ENCODE measurements at regions of chr10 and their contacts with region 1.

Region 1: DNA sequence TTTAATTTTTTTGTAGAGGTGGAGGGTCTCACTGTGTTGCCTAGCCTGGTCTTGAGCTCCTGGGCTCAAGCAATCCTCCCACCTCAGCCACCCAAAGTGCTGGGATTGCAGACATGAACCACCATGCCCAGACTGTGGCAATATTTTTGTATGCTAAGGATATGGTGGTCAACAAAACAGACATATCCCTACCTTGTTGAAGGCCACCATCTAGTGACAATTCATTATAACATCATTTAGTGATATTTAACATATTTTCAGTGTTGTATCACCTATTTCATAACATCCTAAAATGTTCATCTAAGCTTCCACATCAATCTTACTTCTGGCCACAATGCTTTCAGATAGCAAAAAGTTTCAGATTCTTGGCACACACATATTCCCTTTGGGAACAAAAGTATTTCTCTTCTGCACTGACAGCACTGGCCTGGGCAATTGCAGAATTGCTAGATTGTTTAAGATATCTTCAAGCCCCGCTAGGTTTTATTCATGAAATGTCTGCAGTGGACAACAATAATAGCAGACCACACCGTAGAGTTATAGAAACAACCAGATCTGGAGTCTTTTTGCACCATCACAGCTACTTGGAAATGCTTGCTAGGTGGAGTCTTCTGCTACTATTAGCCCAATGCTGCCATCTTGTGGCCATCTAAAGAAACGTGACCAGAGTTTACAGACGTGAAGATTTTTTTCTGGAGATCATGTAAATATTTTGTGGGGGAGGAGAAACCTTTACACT is 58.4 kb downstream of the DNAJC12 start:
- DNase-seq: peak; percentile 75
- ATAC-seq: peak; percentile 90
- H3K4me3 ChIP-seq: no peak overlapping the region
- H3K27ac ChIP-seq: no peak overlapping the region
- H3K4me1 ChIP-seq: no peaks in the 10 kb centered on the region; a peak in 1 of 4 replicates
- H3K27me3 ChIP-seq: no peaks in the 10 kb centered on the region
- CTCF ChIP-seq: peak; percentile 66 to 86 (median 77); a peak in 5 of 6 replicates
- POLR2A ChIP-seq: no peak
- RAD21 ChIP-seq: peak; percentile 90

Region 2: DNA sequence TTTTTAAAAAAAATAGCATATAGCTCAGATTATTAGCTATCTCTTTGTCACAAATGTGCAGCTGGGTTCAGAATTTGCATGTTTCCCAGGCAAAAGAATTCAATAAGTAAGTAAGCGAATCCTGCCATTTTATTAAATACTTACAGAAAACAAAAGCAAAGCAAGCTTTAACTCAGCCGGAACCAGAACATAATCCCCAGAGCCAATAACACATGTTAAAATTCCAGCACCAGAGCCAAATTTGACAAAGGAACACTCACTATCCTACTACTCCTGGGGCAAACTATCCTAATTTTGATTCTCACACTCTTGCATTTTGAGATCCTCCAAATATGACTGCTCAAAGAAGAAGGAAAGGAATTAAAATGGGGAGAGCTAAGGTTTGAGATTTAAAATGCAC is 821.2 kb before region 1 on chr10:
- CTCF ChIA-PET with region 1: no interaction called
- POLR2A ChIA-PET with region 1: no interaction called
- RAD21 ChIA-PET with region 1: no interaction called
- intact Hi-C with region 1: loop called (anchors 10 kb)
- DNase-seq: no peak
- ATAC-seq: no peak
- H3K4me3 ChIP-seq: no peak overlapping the region
- H3K27ac ChIP-seq: no peak overlapping the region
- H3K4me1 ChIP-seq: no peaks in the 10 kb centered on the region
- H3K27me3 ChIP-seq: no peaks in the 10 kb centered on the region
- CTCF ChIP-seq: no peak
- POLR2A ChIP-seq: no peak
- RAD21 ChIP-seq: no peak

Region 3: DNA sequence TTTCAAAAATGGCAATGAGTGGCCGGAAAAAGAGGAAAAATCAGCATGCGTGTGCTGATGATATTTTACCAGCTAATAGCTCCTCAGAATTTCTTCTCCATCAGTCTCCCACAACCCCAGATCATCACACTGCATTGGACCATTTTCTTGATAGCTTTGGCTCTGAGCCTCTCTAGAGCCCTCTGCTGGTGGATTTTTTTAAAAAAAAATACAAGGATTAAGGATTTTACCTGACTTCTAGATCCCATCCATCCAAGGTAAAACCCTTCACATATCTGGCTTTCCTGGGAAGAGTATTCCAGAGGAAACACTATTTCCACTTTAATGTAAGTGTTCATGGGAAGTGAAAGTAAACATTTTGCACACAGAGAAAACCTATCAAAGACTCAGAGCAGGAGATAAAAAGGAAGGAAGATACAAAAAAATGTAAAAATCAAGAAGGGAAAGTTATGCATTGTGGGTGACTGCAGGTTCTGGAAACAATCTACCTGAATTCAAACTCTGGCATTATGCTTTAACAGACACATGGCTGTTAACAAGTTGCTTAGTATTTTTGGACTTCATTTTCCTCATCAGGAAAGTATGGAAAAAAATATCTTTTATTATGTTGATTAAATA is 472.9 kb before region 1 on chr10:
- CTCF ChIA-PET with region 1: interaction called, 5 read pairs
- POLR2A ChIA-PET with region 1: interaction called, 3 read pairs
- RAD21 ChIA-PET with region 1: no interaction called
- intact Hi-C with region 1: loop called (anchors 5 kb)
- DNase-seq: peak; percentile 24
- ATAC-seq: peak; percentile 40; the same call in 1 of the 2 replicates
- H3K4me3 ChIP-seq: no peak overlapping the region
- H3K27ac ChIP-seq: no peak overlapping the region
- H3K4me1 ChIP-seq: no peaks in the 10 kb centered on the region
- H3K27me3 ChIP-seq: no peaks in the 10 kb centered on the region
- CTCF ChIP-seq: peak; percentile 37 to 66 (median 48); a peak in 5 of 6 replicates
- POLR2A ChIP-seq: no peak
- RAD21 ChIP-seq: peak; percentile 56

Region 4: DNA sequence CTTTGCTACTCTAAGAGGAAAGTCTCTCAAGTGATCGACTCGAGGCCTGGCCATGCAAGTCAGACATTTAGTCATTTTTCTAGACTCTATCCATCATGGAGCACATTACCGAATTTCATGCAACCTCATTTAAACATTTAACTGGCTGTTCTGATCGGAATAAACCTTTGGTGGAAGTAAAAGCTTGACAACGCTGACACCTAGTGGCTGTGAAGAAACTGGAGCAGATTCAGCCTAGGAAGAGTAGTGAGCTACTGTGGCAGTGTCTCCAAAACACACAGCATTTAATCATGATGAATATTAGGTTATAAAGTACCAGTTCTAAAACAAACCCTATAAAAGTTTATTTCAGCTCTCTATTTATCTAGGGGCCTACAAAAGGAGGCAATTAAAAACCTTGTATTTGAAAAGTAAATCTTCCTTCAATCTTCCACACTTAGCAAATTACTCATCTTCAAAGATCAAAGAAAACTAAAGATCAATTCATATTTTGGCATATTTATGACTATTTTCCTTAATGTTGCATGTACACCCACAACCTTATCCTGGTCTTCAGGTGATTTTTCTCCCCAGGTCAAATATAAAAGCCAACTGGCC is 258.6 kb before region 1 on chr10:
- CTCF ChIA-PET with region 1: interaction called, 12 read pairs
- POLR2A ChIA-PET with region 1: no interaction called
- RAD21 ChIA-PET with region 1: interaction called in 1 of 2 experiments, 3 read pairs
- intact Hi-C with region 1: loop called (anchors 2 kb)
- DNase-seq: peak; percentile 50
- ATAC-seq: peak; percentile 91
- H3K4me3 ChIP-seq: no peak overlapping the region
- H3K27ac ChIP-seq: no peak overlapping the region
- H3K4me1 ChIP-seq: peaks cover 0 to 3% of the 10 kb centered on the region in 2 experiments; a peak in 1 of 4 replicates
- H3K27me3 ChIP-seq: no peaks in the 10 kb centered on the region
- CTCF ChIP-seq: peak; percentile 65 to 89 (median 79)
- POLR2A ChIP-seq: no peak
- RAD21 ChIP-seq: peak; percentile 84

Region 5: DNA sequence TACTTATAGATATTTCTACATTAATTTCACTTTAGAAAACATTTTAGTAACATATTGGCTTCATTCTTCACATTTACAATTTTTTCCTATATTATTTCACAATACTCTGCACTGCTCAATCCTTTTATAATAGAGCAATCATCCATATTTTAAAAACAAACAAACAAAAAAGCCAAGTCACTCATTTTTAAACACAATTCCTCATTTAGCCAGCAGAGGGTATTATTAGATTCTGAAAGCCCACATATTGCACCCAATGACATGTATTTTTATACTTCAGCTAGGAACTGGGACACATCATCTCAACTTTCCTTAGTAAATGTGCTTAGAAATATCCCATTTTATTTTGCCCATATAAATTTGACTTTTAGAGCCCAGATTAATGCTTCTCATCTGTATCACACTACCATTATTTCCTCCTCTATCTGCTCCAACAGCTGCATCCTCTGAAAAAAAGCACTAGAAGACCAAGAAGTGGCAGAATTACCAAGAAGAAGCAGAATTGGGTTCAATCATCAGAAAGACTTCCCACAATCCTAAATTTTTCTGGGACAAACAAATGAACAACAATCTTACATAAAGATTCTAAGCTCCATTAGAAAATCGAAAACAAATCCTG is 113.1 kb before region 1 on chr10:
- CTCF ChIA-PET with region 1: interaction called, 13 read pairs
- POLR2A ChIA-PET with region 1: no interaction called
- RAD21 ChIA-PET with region 1: interaction called in 1 of 2 experiments, 3 read pairs
- intact Hi-C with region 1: loop called (anchors 1 kb)
- DNase-seq: peak; percentile 60
- ATAC-seq: peak; percentile 67
- H3K4me3 ChIP-seq: no peak overlapping the region
- H3K27ac ChIP-seq: no peak overlapping the region
- H3K4me1 ChIP-seq: peaks cover 13 to 21% of the 10 kb centered on the region in 2 experiments
- H3K27me3 ChIP-seq: no peaks in the 10 kb centered on the region
- CTCF ChIP-seq: peak; percentile 48 to 64 (median 59)
- POLR2A ChIP-seq: no peak
- RAD21 ChIP-seq: peak; percentile 71

Region 6: GRCh38 chr10:67697724-67698131 is 81.9 kb before region 1 on chr10:
- CTCF ChIA-PET with region 1: interaction called, 52 read pairs
- POLR2A ChIA-PET with region 1: interaction called, 3 read pairs
- RAD21 ChIA-PET with region 1: interaction called, 8 to 11 read pairs
- intact Hi-C with region 1: loop called (anchors 1 kb)
- DNase-seq: peak; percentile 41
- ATAC-seq: peak; percentile 94
- H3K4me3 ChIP-seq: no peak overlapping the region
- H3K27ac ChIP-seq: no peak overlapping the region
- H3K4me1 ChIP-seq: peaks cover 0 to 3% of the 10 kb centered on the region in 2 experiments; a peak in 2 of 4 replicates
- H3K27me3 ChIP-seq: no peaks in the 10 kb centered on the region
- CTCF ChIP-seq: peak; percentile 64 to 69 (median 66); a peak in 5 of 6 replicates
- POLR2A ChIP-seq: no peak
- RAD21 ChIP-seq: peak; percentile 64

Region 7: GRCh38 chr10:67837541-67838314 is 58.1 kb after region 1 on chr10 and contains the start of gene DNAJC12:
- CTCF ChIA-PET with region 1: no interaction called
- POLR2A ChIA-PET with region 1: no interaction called
- RAD21 ChIA-PET with region 1: no interaction called
- intact Hi-C with region 1: no loop called
- DNase-seq: peak; percentile 37
- ATAC-seq: peak; percentile 97
- H3K4me3 ChIP-seq: peak within 1 kb of the TSS; percentile 29 to 39
- H3K27ac ChIP-seq: no peak within 1 kb of the TSS
- H3K4me1 ChIP-seq: peaks cover 4 to 10% of the 10 kb centered on the region in 2 experiments; a peak in 3 of 4 replicates
- H3K27me3 ChIP-seq: no peaks in the 10 kb centered on the region
- CTCF ChIP-seq: no peak
- POLR2A ChIP-seq: no peak
- RAD21 ChIP-seq: peak; percentile 26
- total RNA-seq, gene DNAJC12: 4.3 TPM

Region 8: GRCh38 chr10:67849331-67850011 is 69.8 kb after region 1 on chr10:
- CTCF ChIA-PET with region 1: no interaction called
- POLR2A ChIA-PET with region 1: no interaction called
- RAD21 ChIA-PET with region 1: no interaction called
- intact Hi-C with region 1: no loop called
- DNase-seq: peak; percentile 87
- ATAC-seq: peak; percentile 99
- H3K4me3 ChIP-seq: peak overlapping the region; percentile 88
- H3K27ac ChIP-seq: peak overlapping the region; percentile 64
- H3K4me1 ChIP-seq: 0 out of 4 replicates have a peak, but pooled peaks cover 0 to 2% of the 10 kb centered on the region in 2 experiments
- H3K27me3 ChIP-seq: no peaks in the 10 kb centered on the region
- CTCF ChIP-seq: no peak
- POLR2A ChIP-seq: peak; percentile 56
- RAD21 ChIP-seq: no peak